WTC11 (cell line): ENCODE measurements at regions of chr2 and their contacts with region 1.

Region 1: GRCh38 chr2:161063157-161063954 is 96.9 kb upstream of the TANK start:
- DNase-seq: peak; percentile 79
- ATAC-seq: peak; percentile 97
- H3K4me3 Mint-ChIP-seq: no peak overlapping the region
- H3K27ac Mint-ChIP-seq: no peak overlapping the region
- H3K4me1 Mint-ChIP-seq: peaks cover 9% of the 10 kb centered on the region
- H3K27me3 Mint-ChIP-seq: no peaks in the 10 kb centered on the region
- CTCF ChIP-seq: peak; percentile 82

Region 2: GRCh38 chr2:160977376-160977775 is 86.0 kb before region 1 on chr2:
- CTCF ChIA-PET with region 1: no interaction called
- POLR2A ChIA-PET with region 1: no interaction called
- DNase-seq: no peak
- ATAC-seq: no peak
- H3K4me3 Mint-ChIP-seq: no peak overlapping the region
- H3K27ac Mint-ChIP-seq: no peak overlapping the region
- H3K4me1 Mint-ChIP-seq: peaks cover 2% of the 10 kb centered on the region; the same call in 1 of the 2 replicates
- H3K27me3 Mint-ChIP-seq: no peaks in the 10 kb centered on the region; the same call in 1 of the 2 replicates
- CTCF ChIP-seq: no peak

Region 3: DNA sequence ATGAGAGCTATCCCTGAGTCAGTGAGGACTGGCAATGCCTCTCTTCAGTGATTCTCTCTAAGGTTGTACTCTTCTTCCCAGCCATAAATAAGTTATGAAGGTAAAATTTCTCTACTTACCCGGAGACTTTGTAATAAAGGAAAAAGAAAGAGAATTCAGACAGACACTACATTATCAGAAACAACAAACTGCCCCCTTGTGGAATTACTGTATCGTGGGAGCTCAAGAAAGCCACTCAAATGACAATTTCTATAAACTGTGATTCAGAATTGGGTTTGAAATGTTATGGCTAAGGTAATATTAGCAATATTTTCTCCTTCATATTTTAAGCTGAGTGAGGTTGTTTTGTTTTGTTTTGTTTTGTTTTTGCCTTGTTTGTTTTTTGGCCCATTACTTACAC is 59.0 kb before region 1 on chr2:
- CTCF ChIA-PET with region 1: interaction called, 20 read pairs
- POLR2A ChIA-PET with region 1: no interaction called
- DNase-seq: no peak
- ATAC-seq: no peak
- H3K4me3 Mint-ChIP-seq: no peak overlapping the region
- H3K27ac Mint-ChIP-seq: no peak overlapping the region
- H3K4me1 Mint-ChIP-seq: peaks cover 9% of the 10 kb centered on the region
- H3K27me3 Mint-ChIP-seq: no peaks in the 10 kb centered on the region
- CTCF ChIP-seq: no peak

Region 4: GRCh38 chr2:161046876-161047275 is 16.5 kb before region 1 on chr2:
- CTCF ChIA-PET with region 1: interaction called, 15 read pairs
- POLR2A ChIA-PET with region 1: no interaction called
- DNase-seq: no peak
- ATAC-seq: no peak
- H3K4me3 Mint-ChIP-seq: no peak overlapping the region
- H3K27ac Mint-ChIP-seq: no peak overlapping the region
- H3K4me1 Mint-ChIP-seq: peaks cover 29% of the 10 kb centered on the region
- H3K27me3 Mint-ChIP-seq: no peaks in the 10 kb centered on the region
- CTCF ChIP-seq: no peak

Region 5: DNA sequence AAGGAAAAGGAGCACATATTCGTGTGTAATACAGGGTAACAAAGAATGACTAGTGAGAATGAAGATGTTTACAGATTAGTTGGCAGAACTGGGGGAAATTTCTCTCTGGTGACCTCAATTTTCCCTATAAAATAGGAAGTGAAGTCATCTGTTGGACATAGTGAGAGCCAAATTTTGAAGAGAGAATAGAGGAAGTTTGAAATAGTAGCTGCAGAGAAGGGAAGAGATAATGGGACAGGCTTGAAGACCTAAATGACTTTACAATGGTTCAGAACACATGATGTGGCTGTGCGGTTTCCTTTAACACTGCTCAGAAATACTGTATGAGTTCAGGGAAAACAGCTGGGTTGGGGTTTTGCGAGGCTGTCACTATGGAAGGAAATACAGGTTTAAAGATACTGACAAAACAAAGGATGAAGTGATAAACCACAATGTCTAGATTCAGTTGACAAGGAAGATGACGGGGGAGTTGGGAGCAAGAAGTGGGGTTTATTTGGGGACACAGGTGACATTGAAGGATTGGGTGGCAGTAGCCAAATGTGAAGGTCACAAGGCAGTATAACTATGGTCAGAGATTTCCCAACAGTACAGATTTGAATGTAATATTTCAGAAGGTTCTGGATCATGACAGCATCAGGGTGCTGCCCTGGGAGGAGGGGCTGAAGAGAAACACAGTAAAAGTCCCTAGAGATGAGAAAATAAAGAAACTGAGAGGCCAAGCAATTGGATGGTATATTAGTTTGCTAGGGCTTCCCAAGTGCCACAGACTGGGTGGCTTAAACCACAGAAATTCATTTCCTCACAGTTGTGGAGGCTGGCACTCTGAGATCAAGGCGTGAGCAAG is 14.2 kb after region 1 on chr2:
- CTCF ChIA-PET with region 1: interaction called, 13 read pairs
- POLR2A ChIA-PET with region 1: no interaction called
- DNase-seq: no peak
- ATAC-seq: no peak
- H3K4me3 Mint-ChIP-seq: no peak overlapping the region
- H3K27ac Mint-ChIP-seq: peak overlapping the region; percentile 9
- H3K4me1 Mint-ChIP-seq: peaks cover 35% of the 10 kb centered on the region
- H3K27me3 Mint-ChIP-seq: no peaks in the 10 kb centered on the region; the same call in 1 of the 2 replicates
- CTCF ChIP-seq: no peak